Heart left ventricle (tissue), 16 donors: ENCODE measurements at regions of chr15 and their contacts with region 1.

Region 1: DNA sequence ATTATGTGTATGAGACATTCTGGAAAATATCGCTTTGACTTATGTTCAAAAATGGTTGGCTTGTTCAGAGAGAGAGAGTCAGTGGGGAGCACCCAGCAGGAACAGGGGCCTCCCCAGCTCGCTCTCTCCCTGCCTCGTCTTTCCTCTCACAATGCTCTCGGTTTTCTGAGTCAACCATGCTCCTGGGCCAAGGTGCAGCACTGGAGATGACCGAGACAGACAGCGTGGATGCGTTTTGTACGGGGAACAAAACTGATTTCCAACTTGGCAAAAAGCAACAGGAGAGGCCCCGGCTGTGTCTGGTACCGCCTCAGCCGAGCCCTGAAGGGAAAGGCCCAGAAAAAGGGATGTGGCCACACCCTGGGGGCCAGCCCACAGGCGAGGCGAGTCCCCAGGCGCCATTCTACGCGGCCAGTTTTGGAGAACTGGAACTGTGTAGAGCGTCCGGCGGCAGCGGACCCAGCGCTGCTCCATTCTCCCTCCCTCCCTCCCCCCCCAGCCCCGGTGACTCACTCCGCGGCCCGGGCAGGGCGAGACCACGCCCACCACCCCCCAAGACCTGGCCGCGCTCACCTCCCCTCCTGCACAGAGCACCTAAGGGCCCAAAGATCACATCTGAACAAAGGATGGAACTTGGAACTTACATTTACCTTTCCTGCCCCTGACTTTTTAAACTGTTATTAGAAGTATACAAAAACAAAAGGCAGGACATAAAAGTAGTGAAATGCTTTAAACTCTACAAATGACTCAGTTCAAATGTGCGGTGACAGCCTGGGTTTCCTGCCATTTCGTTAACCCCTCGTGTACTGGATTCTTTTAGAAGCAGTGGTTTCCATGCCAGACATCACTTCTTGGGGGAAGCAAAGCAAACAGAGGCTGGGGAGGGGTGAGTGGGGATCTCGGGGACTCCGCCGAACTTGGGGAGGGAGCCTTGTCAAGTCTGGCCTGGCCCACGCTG is 12.7 kb downstream of the ATP10A start:
- DNase-seq: peak; percentile 74 to 90 (median 86)
- ATAC-seq: peak; percentile 56 to 95 (median 88)
- H3K4me3 ChIP-seq: peak overlapping the region in 10 of 12 donors; percentile 28 to 58 (median 48)
- H3K27ac ChIP-seq: peak overlapping the region; percentile 38 to 92 (median 68)
- H3K4me1 ChIP-seq: peaks cover 0 to 50% (median 11%) of the 10 kb centered on the region in 12 donors
- H3K27me3 ChIP-seq: no peaks in the 10 kb centered on the region
- CTCF ChIP-seq: no peak
- POLR2A ChIP-seq: no peak

Region 2: DNA sequence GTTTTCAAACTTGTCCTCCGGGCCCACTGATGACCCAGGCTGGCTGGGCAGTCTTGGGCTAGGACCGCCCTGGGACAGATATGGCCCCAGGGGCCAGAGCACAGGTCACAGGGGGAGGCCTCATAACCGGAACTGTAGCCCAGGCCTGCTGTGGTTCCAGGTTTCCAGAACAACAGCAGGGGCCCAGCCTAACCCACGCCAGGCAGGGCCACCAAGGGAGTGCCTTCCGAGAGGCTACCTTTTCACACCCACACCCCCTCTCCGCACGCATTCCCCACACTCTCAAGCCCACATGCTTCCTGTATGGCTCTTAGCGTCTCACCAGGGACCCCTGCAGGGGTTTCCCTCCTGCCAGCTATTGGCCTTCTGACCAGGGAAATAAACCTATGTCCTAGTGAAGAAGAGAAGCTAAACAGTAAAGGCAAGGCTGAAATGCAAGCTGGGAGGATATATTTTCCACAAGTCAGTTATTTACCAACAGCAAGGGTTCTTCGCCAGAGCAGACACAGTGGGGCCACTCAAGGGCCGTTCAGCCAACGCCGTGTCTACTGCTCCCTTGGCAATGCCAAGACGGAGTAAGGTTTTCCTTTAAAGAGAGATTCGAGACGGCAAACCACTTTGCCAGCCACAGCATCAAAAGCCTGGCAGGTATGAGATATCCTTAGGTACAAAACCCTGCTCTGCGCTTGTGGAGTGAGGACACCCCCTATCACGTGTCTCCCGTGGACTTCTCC is 122.4 kb before region 1 on chr15:
- intact Hi-C with region 1: no loop called
- DNase-seq: no peak
- ATAC-seq: no peak
- H3K4me3 ChIP-seq: no peak overlapping the region
- H3K27ac ChIP-seq: no peak overlapping the region
- H3K4me1 ChIP-seq: peaks cover 0 to 8% (median 0%) of the 10 kb centered on the region in 12 donors
- H3K27me3 ChIP-seq: no peaks in the 10 kb centered on the region
- CTCF ChIP-seq: no peak
- POLR2A ChIP-seq: no peak

Region 3: DNA sequence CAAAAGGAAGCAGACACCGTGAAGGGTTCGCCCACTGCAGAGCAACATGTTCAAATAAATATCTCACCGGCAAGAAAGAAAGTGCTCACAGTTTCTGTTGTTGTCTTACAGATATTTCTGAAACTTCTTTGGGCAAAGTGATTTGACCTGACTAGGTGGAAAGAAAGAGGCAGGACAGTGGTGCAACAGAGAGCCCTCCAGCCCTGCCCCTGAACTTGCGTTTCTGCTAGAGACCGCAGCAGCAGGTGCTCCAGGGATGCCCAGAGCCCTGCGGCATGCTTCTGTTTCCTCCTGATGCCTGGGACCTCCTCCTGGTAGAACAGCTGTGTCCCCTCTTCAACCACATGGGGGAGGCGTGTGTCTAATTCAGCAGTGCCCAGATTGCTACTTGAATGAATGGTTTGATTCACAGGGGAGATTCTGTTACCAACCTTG is 110.7 kb before region 1 on chr15:
- intact Hi-C with region 1: loop called in 1 of 10 experiments (anchors 10 kb)
- DNase-seq: no peak
- ATAC-seq: peak in 1 of 4 donors; percentile 33
- H3K4me3 ChIP-seq: no peak overlapping the region
- H3K27ac ChIP-seq: no peak overlapping the region
- H3K4me1 ChIP-seq: peaks cover 0 to 38% (median 16%) of the 10 kb centered on the region in 12 donors
- H3K27me3 ChIP-seq: no peaks in the 10 kb centered on the region
- CTCF ChIP-seq: peak in 8 of 12 donors; percentile 16 to 40 (median 34)
- POLR2A ChIP-seq: no peak

Region 4: DNA sequence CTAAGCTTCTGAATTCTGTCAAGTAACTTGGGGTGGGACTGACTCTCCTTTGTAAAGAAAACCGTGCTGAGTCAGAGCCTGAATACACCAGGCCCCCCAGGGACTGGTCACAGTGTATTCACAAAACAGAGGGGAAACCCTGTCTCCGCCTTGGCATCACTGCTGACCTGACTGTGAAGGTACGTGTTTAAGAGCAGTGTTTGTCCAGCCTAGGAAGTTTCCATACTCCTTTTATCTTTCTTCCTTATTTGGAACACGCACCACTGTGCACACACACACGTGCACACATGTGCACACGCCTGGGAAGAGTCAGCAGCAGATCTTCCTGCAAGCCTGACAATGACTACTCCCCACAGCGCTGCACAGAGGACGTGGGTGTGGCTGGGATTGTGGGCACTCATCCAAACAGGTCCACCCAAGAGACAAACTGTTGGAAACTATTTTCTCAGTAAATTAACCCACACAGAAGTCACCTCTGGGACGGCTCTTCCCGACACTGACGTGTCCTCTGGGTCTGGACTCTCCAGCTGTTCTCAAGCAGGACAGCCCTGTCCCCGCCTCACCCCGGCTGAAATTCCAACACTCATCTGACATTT is 75.0 kb before region 1 on chr15:
- intact Hi-C with region 1: loop called in 1 of 10 experiments (anchors 5 kb)
- DNase-seq: peak; percentile 65 to 85 (median 79)
- ATAC-seq: peak; percentile 79 to 94 (median 92)
- H3K4me3 ChIP-seq: no peak overlapping the region
- H3K27ac ChIP-seq: peak overlapping the region in 8 of 12 donors; percentile 19 to 46 (median 33)
- H3K4me1 ChIP-seq: peaks cover 0 to 20% (median 9%) of the 10 kb centered on the region in 12 donors
- H3K27me3 ChIP-seq: no peaks in the 10 kb centered on the region
- CTCF ChIP-seq: no peak
- POLR2A ChIP-seq: no peak

Region 5: DNA sequence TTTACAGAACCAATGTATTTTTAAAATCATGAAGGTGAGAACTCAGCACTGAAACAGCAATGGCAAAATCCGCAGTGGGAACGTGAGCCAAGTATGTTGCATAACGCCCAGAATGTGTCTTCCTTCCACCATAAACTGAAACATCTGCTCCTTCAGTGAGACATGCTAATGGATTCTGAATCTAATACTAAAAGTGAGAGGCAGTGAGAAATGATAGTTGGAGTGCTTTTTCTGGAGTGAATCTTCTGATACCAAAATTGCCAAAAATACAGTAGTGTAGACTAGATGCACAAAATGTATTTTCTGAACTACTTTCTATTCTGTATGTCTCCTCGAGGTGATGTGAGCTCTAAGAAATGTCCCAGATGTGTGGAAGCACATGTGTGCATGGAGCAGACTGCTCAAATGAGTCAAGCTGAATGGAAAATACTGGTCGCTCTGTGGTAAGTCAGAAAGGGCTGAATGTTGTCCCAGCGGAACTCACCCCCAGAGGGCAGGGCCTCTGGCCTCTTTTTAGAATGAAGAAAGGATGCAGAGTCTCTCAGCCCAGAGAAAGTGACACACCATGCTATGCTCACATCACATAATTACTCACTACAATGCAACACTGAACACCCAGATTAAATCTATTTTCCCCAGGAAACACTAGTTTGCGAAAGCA is 60.3 kb before region 1 on chr15:
- intact Hi-C with region 1: loop called in 3 of 10 experiments (anchors 5 to 10 kb)
- DNase-seq: peak in 4 of 5 donors; percentile 45 to 73 (median 62)
- ATAC-seq: peak; percentile 69 to 85 (median 78)
- H3K4me3 ChIP-seq: no peak overlapping the region
- H3K27ac ChIP-seq: peak overlapping the region; percentile 3 to 88 (median 68)
- H3K4me1 ChIP-seq: peaks cover 0 to 63% (median 14%) of the 10 kb centered on the region in 12 donors
- H3K27me3 ChIP-seq: no peaks in the 10 kb centered on the region
- CTCF ChIP-seq: no peak
- POLR2A ChIP-seq: no peak